ENCODE measurements at regions of chr16 and their contacts with region 1.

Region 1: DNA sequence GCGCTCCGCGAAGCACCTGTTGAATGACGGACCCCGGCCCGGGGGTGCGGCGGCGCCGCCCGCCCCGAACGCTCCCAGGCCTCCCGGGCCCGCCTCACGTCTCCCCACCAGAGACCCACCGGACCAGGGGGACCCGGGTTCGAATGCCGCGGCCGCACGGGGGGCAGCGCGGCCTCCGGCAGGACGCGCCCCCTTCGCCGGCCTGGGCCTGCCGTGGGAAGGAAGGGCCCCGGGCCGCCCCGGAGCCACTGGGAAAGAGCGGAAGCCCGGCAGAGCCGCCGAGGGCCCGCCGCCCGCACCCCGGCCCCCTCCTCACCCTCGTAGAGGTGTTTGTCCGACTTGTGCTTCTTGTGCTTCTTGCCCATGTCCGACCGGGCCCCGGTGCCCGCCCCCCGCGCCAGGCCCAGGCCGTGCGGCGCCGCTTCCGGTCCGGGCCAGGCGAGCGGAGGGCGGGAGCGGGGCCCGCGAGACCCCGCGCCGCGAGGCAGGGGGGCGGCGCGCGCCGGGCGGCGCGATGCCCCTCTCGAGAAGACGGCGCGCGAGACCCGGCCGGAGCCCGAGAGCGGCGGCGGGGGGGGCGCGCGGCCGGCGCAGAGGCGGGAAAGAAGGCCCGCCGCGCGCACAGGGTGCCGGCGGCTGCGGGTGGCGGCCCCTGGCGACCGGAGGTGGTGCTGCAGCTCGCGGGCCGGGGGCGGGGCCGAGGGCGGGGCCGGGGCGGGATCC is at the start of gene BRD7:
- DNase-seq: peak; percentile 56
- H3K4me3 Mint-ChIP-seq: peak within 1 kb of the TSS; percentile 96
- H3K27ac Mint-ChIP-seq: peak within 1 kb of the TSS; percentile 94
- H3K4me1 Mint-ChIP-seq: peaks cover 51% of the 10 kb centered on the region
- H3K27me3 Mint-ChIP-seq: no peaks in the 10 kb centered on the region
- total RNA-seq, gene BRD7: 88.8 and 91.0 TPM in 2 replicates

Region 2: GRCh38 chr16:50024684-50025536 is 343.7 kb before region 1 on chr16 and contains the start of gene CNEP1R1:
- intact Hi-C with region 1: loop called (anchors 1 kb)
- DNase-seq: peak; percentile 92
- H3K4me3 Mint-ChIP-seq: peak within 1 kb of the TSS; percentile 96
- H3K27ac Mint-ChIP-seq: peak within 1 kb of the TSS; percentile 84
- H3K4me1 Mint-ChIP-seq: peaks cover 26% of the 10 kb centered on the region
- H3K27me3 Mint-ChIP-seq: peaks cover 11% of the 10 kb centered on the region
- total RNA-seq, gene CNEP1R1: 21.9 and 22.7 TPM in 2 replicates

Region 3: GRCh38 chr16:50266337-50267091 is 102.1 kb before region 1 on chr16 and contains the start of gene ADCY7:
- intact Hi-C with region 1: loop called (anchors 2 kb)
- DNase-seq: peak; percentile 79
- H3K4me3 Mint-ChIP-seq: peak within 1 kb of the TSS; percentile 86
- H3K27ac Mint-ChIP-seq: peak within 1 kb of the TSS; percentile 96
- H3K4me1 Mint-ChIP-seq: peaks cover 86% of the 10 kb centered on the region
- H3K27me3 Mint-ChIP-seq: no peaks in the 10 kb centered on the region
- total RNA-seq, gene ADCY7: 78.0 and 81.9 TPM in 2 replicates

Region 4: DNA sequence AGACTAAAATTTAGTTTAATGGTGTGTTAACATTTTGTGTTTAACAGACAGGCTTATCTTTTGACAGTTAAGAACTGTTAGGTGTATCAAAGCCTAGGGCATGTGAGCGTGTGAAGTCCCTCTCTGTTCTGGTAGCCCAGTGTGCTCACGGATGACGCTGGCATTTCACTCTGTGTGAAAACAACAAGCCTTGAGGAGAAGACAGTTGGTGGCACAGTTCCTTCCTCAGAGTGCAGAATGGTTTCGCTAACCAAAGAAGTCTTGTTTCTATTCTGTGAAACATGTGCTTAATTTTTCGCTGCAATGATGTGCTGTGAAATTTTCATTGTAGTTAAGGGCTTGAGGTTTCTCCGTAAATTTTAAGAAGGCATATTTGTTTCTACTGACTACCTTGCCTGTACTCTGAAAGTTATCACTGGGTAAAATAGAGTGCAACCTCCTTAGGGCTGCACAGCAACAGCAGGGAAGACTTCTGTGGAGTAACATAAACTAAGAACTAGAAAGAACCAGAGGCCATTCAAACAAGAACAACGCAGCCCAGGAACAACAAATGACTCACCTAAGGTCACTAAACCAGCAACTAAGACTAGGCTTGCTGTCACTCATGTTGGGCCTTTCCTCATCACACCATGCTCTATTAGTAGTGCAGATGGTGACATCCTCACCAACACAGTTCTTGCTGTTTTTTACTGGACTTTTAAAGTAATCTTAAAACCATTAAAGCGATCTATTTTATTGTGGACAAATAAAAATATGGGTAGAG is 33.2 kb before region 1 on chr16:
- intact Hi-C with region 1: loop called (anchors 2 kb)
- DNase-seq: no peak
- H3K4me3 Mint-ChIP-seq: peak overlapping the region; percentile 37
- H3K27ac Mint-ChIP-seq: peak overlapping the region; percentile 87
- H3K4me1 Mint-ChIP-seq: peaks cover 48% of the 10 kb centered on the region
- H3K27me3 Mint-ChIP-seq: no peaks in the 10 kb centered on the region

Region 5: GRCh38 chr16:50548125-50548908 is 179.7 kb after region 1 on chr16 and contains the start of gene NKD1:
- intact Hi-C with region 1: loop called (anchors 1 kb)
- DNase-seq: peak; percentile 65
- H3K4me3 Mint-ChIP-seq: peak within 1 kb of the TSS; percentile 91
- H3K27ac Mint-ChIP-seq: peak within 1 kb of the TSS; percentile 59
- H3K4me1 Mint-ChIP-seq: peaks cover 14% of the 10 kb centered on the region
- H3K27me3 Mint-ChIP-seq: peaks cover 37% of the 10 kb centered on the region
- total RNA-seq, gene NKD1: 1.1 and 1.4 TPM in 2 replicates

Region 6: GRCh38 chr16:50747207-50747956 is 378.8 kb after region 1 on chr16:
- intact Hi-C with region 1: loop called (anchors 2 kb)
- DNase-seq: peak; percentile 40
- H3K4me3 Mint-ChIP-seq: peak overlapping the region; percentile 85
- H3K27ac Mint-ChIP-seq: peak overlapping the region; percentile 92
- H3K4me1 Mint-ChIP-seq: peaks cover 74% of the 10 kb centered on the region
- H3K27me3 Mint-ChIP-seq: no peaks in the 10 kb centered on the region

Measured in activated T-helper 1 cell treated with anti-CD3 and anti-CD28 coated beads, Interleukin-12 subunit alpha, Interleukin-12 subunit beta, Interleukin-2, Interleukin-4 antibody, amounts not matched to agents 30 ng/mL and 10 ng/mL and 1 ng/mL, durations not matched to agents 14 hours and 24 hours and 36 hours (primary cell).